WTC11 (cell line): ENCODE measurements at regions of chr2 and their contacts with region 1.

Region 1: GRCh38 chr2:20650880-20651730 is at the start of gene HS1BP3:
- DNase-seq: peak; percentile 77
- ATAC-seq: peak; percentile 93
- H3K4me3 Mint-ChIP-seq: peak within 1 kb of the TSS; percentile 83
- H3K27ac Mint-ChIP-seq: peak within 1 kb of the TSS; percentile 69; the same call in 1 of the 2 replicates
- H3K4me1 Mint-ChIP-seq: peaks cover 31% of the 10 kb centered on the region
- H3K27me3 Mint-ChIP-seq: peaks cover 17% of the 10 kb centered on the region
- CTCF ChIP-seq: peak; percentile 88
- total RNA-seq, gene HS1BP3: 17.9 to 20.1 TPM (median 19.8 TPM) in 3 replicates

Region 2: GRCh38 chr2:20411361-20411894 is 239.7 kb before region 1 on chr2:
- CTCF ChIA-PET with region 1: interaction called, 30 read pairs
- POLR2A ChIA-PET with region 1: no interaction called
- DNase-seq: peak; percentile 89
- ATAC-seq: peak; percentile 100
- H3K4me3 Mint-ChIP-seq: no peak overlapping the region
- H3K27ac Mint-ChIP-seq: no peak overlapping the region
- H3K4me1 Mint-ChIP-seq: no peaks in the 10 kb centered on the region
- H3K27me3 Mint-ChIP-seq: peaks cover 6% of the 10 kb centered on the region
- CTCF ChIP-seq: peak; percentile 78

Region 3: DNA sequence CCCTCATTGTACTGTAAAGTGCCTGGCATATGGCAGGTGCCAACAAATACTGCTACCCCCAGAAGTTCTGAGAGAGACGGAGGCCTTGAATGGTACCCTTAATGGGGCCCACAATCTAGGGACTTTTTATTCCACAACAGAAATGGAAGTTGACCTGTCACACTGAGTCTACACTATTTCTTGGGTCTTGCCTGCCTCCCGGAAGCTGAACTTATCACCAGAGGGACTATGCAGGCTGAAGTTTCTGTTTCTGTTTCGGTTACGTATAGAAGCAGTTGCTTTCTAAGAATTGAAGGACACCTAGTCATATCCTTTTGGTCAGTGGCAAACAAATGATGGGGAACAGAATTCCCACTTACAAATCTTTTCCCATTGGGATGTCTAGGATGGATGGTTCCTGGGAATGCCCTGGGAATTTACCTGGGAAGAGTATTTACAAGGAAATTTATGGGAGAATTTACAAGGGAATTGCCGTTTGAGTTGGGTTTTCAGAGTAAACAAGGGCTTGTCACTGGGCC is 74.4 kb before region 1 on chr2:
- CTCF ChIA-PET with region 1: no interaction called
- POLR2A ChIA-PET with region 1: no interaction called
- DNase-seq: no peak
- ATAC-seq: no peak
- H3K4me3 Mint-ChIP-seq: no peak overlapping the region
- H3K27ac Mint-ChIP-seq: no peak overlapping the region
- H3K4me1 Mint-ChIP-seq: 0 out of 2 replicates have a peak, but pooled peaks cover 4% of the 10 kb centered on the region
- H3K27me3 Mint-ChIP-seq: no peaks in the 10 kb centered on the region; the same call in 1 of the 2 replicates
- CTCF ChIP-seq: no peak

Region 4: DNA sequence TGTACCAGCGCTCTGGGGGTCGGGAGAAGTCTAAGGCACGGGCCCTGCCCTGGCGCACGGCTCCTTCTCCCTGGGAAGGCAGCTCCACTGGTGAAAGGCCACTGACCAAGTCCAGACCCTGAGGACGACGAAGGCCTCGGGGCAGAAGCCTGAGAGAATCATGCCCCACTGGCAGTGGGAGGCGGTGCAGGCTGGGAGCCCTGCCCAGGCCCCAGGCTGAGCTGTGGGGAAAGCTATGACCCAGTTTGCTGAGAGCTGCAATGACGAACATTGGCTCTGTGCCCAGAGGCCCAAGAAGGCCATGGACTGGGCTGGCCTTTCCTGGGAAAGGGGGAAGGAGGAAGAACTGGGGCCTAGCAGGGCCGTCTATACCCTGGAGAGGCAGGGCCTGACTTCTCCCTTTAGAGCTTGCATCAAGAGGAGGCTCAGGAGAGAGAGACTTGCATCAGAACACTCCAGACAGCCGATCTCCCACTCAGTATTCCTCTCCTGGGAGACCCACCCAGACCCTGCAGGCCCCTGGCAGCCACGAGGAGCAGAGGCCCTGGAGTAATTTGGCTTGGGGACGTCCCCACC is 33.1 kb before region 1 on chr2:
- CTCF ChIA-PET with region 1: interaction called, 10 read pairs
- POLR2A ChIA-PET with region 1: no interaction called
- DNase-seq: no peak
- ATAC-seq: peak; percentile 11; the same call in 1 of the 2 replicates
- H3K4me3 Mint-ChIP-seq: no peak overlapping the region
- H3K27ac Mint-ChIP-seq: peak overlapping the region; percentile 72; the same call in 1 of the 2 replicates
- H3K4me1 Mint-ChIP-seq: peaks cover 31% of the 10 kb centered on the region
- H3K27me3 Mint-ChIP-seq: no peaks in the 10 kb centered on the region
- CTCF ChIP-seq: no peak

Region 5: DNA sequence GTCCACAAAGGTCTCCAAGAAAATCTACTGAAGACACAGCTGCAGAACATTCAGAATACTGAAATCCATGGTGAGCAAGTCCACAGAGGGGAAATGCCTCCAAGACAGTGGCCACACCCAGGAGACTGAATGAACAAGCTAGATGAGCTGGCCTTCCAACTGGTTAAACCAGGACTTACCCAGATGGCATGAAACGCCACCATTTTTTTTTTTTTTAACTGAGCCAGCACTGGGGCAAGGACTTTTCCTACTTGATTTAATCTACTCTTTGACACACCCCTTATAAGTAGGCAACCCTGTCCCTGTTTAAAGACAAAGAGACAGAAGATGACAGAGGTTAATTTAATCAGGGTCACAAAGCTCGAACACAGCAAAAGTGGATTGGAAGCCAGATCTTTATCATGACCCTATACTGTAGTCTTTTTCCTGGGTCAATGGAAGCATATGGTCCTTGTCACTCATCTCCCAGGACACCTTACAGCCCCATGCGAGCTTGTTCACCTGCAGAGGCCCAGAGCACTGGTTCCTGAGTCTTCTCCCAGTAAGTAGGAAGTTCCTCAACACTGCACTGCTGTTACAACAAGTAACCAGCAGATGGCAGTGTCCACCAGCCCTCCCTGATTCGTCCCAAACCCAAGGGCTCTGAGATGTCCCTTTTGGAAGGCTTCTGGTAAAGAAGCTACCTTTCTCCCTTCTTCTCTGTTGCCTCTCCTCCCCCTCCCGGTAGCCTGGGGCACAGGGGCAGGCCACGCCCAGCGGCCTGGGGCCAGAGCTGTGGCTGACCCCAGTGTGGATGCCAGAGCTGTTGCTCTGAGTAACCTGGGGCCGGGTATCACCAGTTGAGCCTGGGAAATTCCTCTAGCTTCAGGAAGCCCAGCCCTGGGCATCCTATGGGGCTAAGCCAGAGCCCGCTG is 10.2 kb after region 1 on chr2:
- CTCF ChIA-PET with region 1: interaction called, 77 read pairs
- POLR2A ChIA-PET with region 1: interaction called, 8 read pairs
- DNase-seq: peak; percentile 76
- ATAC-seq: peak; percentile 70
- H3K4me3 Mint-ChIP-seq: no peak overlapping the region
- H3K27ac Mint-ChIP-seq: no peak overlapping the region
- H3K4me1 Mint-ChIP-seq: peaks cover 21% of the 10 kb centered on the region
- H3K27me3 Mint-ChIP-seq: peaks cover 67% of the 10 kb centered on the region
- CTCF ChIP-seq: peak; percentile 92

Region 6: GRCh38 chr2:20675701-20676352 is 24.7 kb after region 1 on chr2:
- CTCF ChIA-PET with region 1: interaction called, 40 read pairs
- POLR2A ChIA-PET with region 1: no interaction called
- DNase-seq: peak; percentile 60
- ATAC-seq: peak; percentile 69
- H3K4me3 Mint-ChIP-seq: no peak overlapping the region
- H3K27ac Mint-ChIP-seq: no peak overlapping the region
- H3K4me1 Mint-ChIP-seq: peaks cover 52% of the 10 kb centered on the region
- H3K27me3 Mint-ChIP-seq: peaks cover 50% of the 10 kb centered on the region
- CTCF ChIP-seq: no peak

Region 7: DNA sequence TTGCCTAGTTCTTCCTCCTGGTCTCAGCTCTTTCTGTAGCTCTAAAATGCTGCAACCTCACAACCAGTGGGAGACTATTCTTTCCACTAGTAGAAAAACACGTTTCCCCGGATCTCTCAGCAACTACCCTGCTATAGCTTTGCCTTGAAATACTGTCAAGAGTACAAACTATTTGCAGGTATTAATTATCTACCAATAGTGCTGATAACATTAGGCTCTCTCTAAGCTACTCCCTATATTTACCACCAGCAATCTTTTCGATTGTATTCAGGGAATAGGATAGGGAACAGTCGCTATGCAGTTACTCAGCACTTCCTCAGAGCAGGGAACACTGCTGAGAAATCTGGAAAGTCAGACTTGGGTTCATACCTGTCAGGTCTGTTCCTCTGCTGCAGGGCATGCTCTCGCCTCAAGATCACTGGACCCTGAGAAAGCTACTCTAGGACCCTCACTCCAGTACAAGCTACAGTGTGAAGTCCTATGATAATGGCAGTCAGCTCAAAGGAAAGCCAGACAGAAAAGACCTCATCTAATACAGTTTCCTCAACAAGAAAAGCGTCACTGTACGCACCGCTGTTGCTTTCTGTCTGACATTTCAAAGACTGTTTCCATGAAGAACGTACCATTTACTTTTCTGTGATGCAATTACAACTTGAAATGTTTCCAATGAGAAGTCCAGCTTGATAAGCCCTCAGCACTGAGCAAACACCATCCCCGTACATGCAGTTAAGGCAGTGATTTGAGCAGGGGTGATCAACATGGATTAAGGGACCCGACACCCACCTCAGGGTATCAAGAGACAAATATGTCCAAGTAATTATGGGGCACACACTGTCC is 38.5 kb after region 1 on chr2:
- CTCF ChIA-PET with region 1: no interaction called
- POLR2A ChIA-PET with region 1: no interaction called
- DNase-seq: no peak
- ATAC-seq: no peak
- H3K4me3 Mint-ChIP-seq: no peak overlapping the region
- H3K27ac Mint-ChIP-seq: no peak overlapping the region
- H3K4me1 Mint-ChIP-seq: no peaks in the 10 kb centered on the region
- H3K27me3 Mint-ChIP-seq: no peaks in the 10 kb centered on the region
- CTCF ChIP-seq: no peak

Region 8: DNA sequence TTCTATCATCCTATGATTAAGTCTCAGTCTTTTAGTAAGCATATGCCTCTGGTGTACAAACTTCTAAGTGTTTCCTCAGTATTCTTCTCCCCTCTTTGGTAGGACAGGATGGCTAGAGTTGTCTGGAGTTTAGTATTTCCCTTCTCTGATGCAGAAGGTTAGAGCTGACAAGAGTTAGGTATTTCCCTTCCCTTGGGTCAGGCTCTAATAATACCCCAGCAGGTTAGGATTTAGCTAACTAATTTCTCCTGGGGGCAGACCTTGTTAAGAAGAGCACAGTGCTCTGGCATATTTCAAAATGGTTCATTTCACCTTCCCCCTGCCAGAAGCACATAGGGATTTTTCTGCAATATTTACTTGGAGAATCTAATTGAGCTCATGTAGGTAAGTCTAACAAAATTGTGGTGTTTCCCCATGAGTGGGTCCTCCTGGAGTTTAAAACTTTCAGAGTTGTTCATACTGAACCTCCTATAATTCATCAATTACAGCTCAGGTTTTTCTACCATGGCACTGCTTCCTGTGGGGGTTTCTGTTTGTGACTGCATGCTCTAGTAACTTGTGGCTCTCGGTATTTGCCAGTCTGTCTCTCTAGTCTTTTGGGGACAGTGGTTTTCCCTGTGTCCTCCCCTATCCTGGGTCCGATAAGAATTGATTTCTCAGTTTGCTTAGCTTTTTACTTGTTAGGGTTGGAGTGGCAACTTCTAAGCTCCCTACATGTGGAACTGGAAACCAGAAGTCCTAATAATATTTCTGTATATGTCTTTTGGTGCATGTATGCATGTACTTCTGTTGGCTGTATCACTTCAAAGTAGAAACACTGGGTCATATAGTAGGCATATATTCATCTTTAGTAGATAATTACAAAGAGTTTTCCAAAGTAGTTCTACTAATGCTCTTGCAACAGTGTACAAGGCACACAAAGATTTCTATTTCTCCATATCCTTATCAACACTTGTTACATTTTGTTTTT is 93.5 kb after region 1 on chr2:
- CTCF ChIA-PET with region 1: no interaction called
- POLR2A ChIA-PET with region 1: no interaction called
- DNase-seq: no peak
- ATAC-seq: no peak
- H3K4me3 Mint-ChIP-seq: no peak overlapping the region
- H3K27ac Mint-ChIP-seq: no peak overlapping the region
- H3K4me1 Mint-ChIP-seq: no peaks in the 10 kb centered on the region
- H3K27me3 Mint-ChIP-seq: no peaks in the 10 kb centered on the region
- CTCF ChIP-seq: no peak